Cardiac septum (tissue), 1 donor: ENCODE measurements at regions of chr4 and their contacts with region 1.

Region 1: GRCh38 chr4:89024051-89024675 is 32.8 kb downstream of the FAM13A start:
- DNase-seq: no peak

Region 2: DNA sequence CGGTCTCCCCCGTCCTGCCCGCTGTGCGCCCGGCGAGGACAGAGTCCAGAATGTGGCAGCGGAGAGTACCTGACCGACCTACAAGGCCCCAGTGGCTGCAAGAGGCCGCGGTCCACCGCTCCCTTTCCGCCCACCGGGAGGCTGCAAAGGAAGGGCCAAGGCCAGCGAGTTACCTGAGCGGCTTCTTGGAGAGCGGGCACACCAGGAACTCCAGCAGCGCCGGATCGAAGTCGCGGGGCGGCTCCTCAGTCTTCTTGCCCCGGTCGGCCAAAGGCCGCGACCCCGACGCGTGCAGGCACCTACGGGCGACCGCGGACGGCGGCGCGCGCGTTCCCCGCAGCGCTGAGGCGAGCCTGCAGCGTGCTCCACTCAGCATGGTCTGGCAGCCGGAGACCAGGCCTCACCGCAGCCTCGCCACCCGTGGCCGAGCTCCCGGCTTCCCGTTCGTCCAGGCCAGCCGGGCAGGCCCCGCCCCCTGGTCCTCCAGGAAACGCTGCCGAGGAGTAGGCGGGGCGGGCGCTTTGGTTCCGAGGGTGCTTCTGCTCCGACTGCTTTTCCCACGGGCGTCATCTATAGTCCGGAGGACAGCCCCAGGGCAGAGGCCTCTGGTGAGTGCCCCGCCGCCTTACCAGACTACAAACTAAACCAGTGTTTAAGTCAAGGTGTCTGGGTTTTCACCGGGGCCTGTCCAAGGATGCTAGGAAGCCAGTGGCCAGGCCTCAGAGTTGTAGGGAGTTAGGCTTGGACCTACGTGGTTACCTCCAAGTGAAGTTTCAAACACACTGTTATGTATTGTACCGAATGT is 500.6 kb before region 1 on chr4 and contains the start of gene PYURF:
- intact Hi-C with region 1: loop called (anchors 10 kb)
- DNase-seq: peak; percentile 96
- total RNA-seq, gene PYURF: 50.8 TPM

Region 3: GRCh38 chr4:88706574-88706973 is 317.6 kb before region 1 on chr4:
- intact Hi-C with region 1: loop called (anchors 5 kb)
- DNase-seq: no peak

Region 4: DNA sequence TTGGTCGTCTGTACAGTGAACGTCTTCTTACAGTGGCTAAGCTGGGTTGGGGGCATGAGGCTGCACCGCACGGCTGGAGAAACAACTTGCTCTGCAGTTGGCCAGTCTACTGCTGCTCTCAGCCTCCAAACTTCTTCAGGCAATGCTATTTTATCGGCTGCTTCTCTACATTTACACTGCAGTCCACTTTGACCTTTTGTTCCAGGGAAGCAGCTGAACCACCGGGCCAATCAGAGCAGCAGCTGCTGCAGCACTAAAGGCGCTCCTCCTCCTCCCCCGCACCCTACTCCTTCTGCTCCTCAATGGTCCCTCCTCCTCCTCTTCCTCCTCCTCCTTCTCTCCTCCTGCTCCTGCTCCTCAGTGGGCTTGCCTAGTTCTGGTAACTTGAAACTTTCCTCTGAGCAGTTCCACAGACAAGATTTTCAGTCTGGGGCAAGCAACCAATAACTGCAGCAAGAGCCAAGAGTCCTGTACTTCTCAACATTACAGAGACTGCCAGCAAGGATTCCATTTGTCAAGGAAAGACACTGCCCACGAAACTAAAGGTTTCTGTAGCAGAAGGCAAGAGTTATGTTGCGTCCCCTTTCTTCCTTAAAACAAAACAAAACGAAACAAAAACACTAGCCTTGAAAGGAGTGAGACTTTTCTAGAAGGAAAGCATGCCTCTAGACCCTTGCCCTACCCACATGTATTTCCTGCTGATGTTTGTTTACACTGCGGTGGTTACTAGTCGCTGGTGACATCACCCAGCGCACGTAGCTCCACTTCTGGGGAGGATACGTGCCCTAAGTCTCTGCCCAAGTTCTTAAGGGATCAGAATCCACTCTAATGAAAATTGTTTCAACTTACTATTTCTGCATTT is 200.9 kb before region 1 on chr4:
- intact Hi-C with region 1: loop called (anchors 1 kb)
- DNase-seq: peak; percentile 93

Region 5: GRCh38 chr4:89226665-89227574 is 202.8 kb after region 1 on chr4:
- intact Hi-C with region 1: no loop called
- DNase-seq: peak; percentile 85